ENCODE measurements at regions of chr10 and their contacts with region 1.

Region 1: GRCh38 chr10:70596110-70596798 is 6.3 kb downstream of the PRF1 start:
- DNase-seq: peak; percentile 67 to 83
- H3K4me3 ChIP-seq: no peak overlapping the region
- H3K4me3 Mint-ChIP-seq: no peak overlapping the region
- H3K27ac Mint-ChIP-seq: no peak overlapping the region
- H3K4me1 ChIP-seq: peaks cover 18% of the 10 kb centered on the region
- H3K4me1 Mint-ChIP-seq: peaks cover 17% of the 10 kb centered on the region
- H3K27me3 ChIP-seq: no peaks in the 10 kb centered on the region
- H3K27me3 Mint-ChIP-seq: no peaks in the 10 kb centered on the region
- CTCF ChIP-seq: no peak

Region 2: DNA sequence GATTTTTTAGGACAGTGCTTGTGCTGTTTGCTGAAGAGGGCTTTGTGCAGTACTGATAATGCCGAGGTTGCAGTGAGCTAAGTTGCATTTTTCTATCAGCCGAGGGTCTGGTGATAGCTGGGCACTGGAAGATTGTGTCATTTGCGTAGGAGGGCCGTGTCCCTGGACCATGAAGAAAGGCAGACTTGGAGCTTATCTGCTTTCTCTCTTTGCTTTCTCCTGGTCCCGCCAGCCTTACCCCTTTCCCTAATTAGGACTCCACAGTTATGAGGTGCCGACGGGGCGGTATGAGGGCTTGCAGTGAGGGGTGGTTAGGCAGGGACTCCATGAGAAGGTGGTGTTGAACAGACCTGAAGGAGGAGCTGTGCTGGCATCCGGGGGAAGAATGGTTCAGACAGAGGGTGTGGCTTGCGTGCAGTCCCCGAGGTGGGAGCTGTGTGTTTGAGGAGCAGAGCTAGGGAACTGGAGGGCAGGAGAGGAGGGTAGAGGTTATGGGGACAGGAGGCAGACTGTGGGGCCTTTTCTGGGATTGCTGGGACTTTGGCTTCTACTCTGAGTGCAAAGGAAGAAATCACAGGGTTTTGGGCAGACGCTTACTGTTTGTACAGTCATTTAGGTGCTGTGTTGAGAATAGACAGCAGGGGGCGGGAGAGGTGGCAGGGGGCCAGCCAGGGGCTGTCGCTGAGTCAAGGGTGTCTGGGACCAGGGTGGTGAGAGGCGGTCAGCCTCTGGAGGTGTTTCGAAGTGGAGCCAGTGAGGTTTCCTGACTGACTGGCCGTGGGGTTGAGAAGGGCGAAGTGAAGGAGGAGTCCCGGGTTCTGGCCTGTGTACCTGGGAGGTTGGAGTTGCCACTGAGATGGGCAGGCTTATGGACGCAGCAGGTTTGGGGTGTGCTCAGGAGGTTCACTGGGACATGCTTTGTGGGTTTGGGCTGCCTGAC is 37.1 kb before region 1 on chr10:
- CTCF ChIA-PET with region 1: no interaction called
- POLR2A ChIA-PET with region 1: no interaction called
- intact Hi-C with region 1: loop called (anchors 5 kb)
- DNase-seq: peak; percentile 65 to 70
- H3K4me3 ChIP-seq: no peak overlapping the region
- H3K4me3 Mint-ChIP-seq: no peak overlapping the region
- H3K27ac Mint-ChIP-seq: peak overlapping the region; percentile 13
- H3K4me1 ChIP-seq: 0 out of 2 replicates have a peak, but pooled peaks cover 4% of the 10 kb centered on the region
- H3K4me1 Mint-ChIP-seq: peaks cover 16% of the 10 kb centered on the region
- H3K27me3 ChIP-seq: no peaks in the 10 kb centered on the region
- H3K27me3 Mint-ChIP-seq: no peaks in the 10 kb centered on the region
- CTCF ChIP-seq: peak in 1 of 2 experiments; percentile 65

Region 3: GRCh38 chr10:70649526-70649925 is 53.3 kb after region 1 on chr10:
- CTCF ChIA-PET with region 1: no interaction called
- POLR2A ChIA-PET with region 1: no interaction called
- intact Hi-C with region 1: no loop called
- DNase-seq: no peak
- H3K4me3 ChIP-seq: no peak overlapping the region
- H3K4me3 Mint-ChIP-seq: no peak overlapping the region
- H3K27ac Mint-ChIP-seq: no peak overlapping the region
- H3K4me1 ChIP-seq: no peaks in the 10 kb centered on the region
- H3K4me1 Mint-ChIP-seq: no peaks in the 10 kb centered on the region
- H3K27me3 ChIP-seq: no peaks in the 10 kb centered on the region
- H3K27me3 Mint-ChIP-seq: peaks cover 2% of the 10 kb centered on the region
- CTCF ChIP-seq: no peak

Measured in Caco-2 (cell line).